Calu3 (cell line): ENCODE measurements at regions of chr2 and their contacts with region 1.

Region 1: GRCh38 chr2:128536925-128537620 is 218.4 kb upstream of the HS6ST1 start:
- DNase-seq: peak; percentile 59
- H3K4me3 Mint-ChIP-seq: peak overlapping the region; percentile 8
- H3K27ac Mint-ChIP-seq: peak overlapping the region; percentile 83
- H3K4me1 Mint-ChIP-seq: peaks cover 26% of the 10 kb centered on the region
- H3K27me3 Mint-ChIP-seq: no peaks in the 10 kb centered on the region
- CTCF ChIP-seq: no peak

Region 2: GRCh38 chr2:128305159-128306087 is 231.7 kb before region 1 on chr2:
- CTCF ChIA-PET with region 1: no interaction called
- intact Hi-C with region 1: no loop called
- DNase-seq: peak; percentile 72
- H3K4me3 Mint-ChIP-seq: peak overlapping the region; percentile 21
- H3K27ac Mint-ChIP-seq: no peak overlapping the region
- H3K4me1 Mint-ChIP-seq: peaks cover 5% of the 10 kb centered on the region
- H3K27me3 Mint-ChIP-seq: no peaks in the 10 kb centered on the region
- CTCF ChIP-seq: no peak

Region 3: GRCh38 chr2:128449226-128450061 is 87.6 kb before region 1 on chr2:
- CTCF ChIA-PET with region 1: no interaction called
- intact Hi-C with region 1: no loop called
- DNase-seq: no peak
- H3K4me3 Mint-ChIP-seq: no peak overlapping the region
- H3K27ac Mint-ChIP-seq: no peak overlapping the region
- H3K4me1 Mint-ChIP-seq: no peaks in the 10 kb centered on the region
- H3K27me3 Mint-ChIP-seq: peaks cover 53% of the 10 kb centered on the region
- CTCF ChIP-seq: no peak

Region 4: GRCh38 chr2:128494640-128495321 is 42.3 kb before region 1 on chr2:
- CTCF ChIA-PET with region 1: no interaction called
- intact Hi-C with region 1: loop called (anchors 5 kb)
- DNase-seq: no peak
- H3K4me3 Mint-ChIP-seq: no peak overlapping the region
- H3K27ac Mint-ChIP-seq: no peak overlapping the region
- H3K4me1 Mint-ChIP-seq: peaks cover 20% of the 10 kb centered on the region
- H3K27me3 Mint-ChIP-seq: no peaks in the 10 kb centered on the region
- CTCF ChIP-seq: no peak

Region 5: GRCh38 chr2:128578406-128579390 is 41.6 kb after region 1 on chr2:
- CTCF ChIA-PET with region 1: no interaction called
- intact Hi-C with region 1: loop called (anchors 5 kb)
- DNase-seq: no peak
- H3K4me3 Mint-ChIP-seq: no peak overlapping the region
- H3K27ac Mint-ChIP-seq: no peak overlapping the region
- H3K4me1 Mint-ChIP-seq: peaks cover 8% of the 10 kb centered on the region
- H3K27me3 Mint-ChIP-seq: peaks cover 9% of the 10 kb centered on the region
- CTCF ChIP-seq: no peak

Region 6: DNA sequence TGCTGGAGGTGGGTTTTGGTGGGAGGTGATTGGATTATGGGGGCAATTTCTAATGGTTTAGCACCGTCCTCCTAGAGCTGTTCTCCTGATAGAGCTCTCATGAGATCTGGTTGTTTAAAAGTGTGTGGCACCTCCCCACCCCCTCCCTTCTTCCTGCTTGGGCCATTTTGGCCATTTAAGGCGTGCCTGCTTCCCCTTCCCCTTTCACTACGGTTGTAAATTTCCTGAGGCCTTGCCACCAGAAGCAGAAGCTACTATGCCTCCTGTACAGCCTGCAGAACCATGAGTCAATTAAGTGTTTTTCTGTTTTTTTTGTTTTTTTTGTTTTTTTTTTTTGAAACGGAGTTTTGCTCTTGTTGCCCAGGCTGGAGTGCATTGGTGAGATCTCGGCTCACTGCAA is 117.3 kb after region 1 on chr2:
- CTCF ChIA-PET with region 1: no interaction called
- intact Hi-C with region 1: no loop called
- DNase-seq: no peak
- H3K4me3 Mint-ChIP-seq: no peak overlapping the region
- H3K27ac Mint-ChIP-seq: no peak overlapping the region
- H3K4me1 Mint-ChIP-seq: no peaks in the 10 kb centered on the region
- H3K27me3 Mint-ChIP-seq: peaks cover 10% of the 10 kb centered on the region
- CTCF ChIP-seq: no peak